Right cardiac atrium (tissue), 5 donors: ENCODE measurements at regions of chr2 and their contacts with region 1.

Region 1: GRCh38 chr2:178128836-178129630 is 16.8 kb downstream of the RBM45 start:
- DNase-seq: no peak
- ATAC-seq: no peak
- H3K4me3 ChIP-seq: no peak overlapping the region
- H3K27ac ChIP-seq: no peak overlapping the region
- H3K4me1 ChIP-seq: peaks cover 1% of the 10 kb centered on the region
- H3K27me3 ChIP-seq: no peaks in the 10 kb centered on the region

Region 2: DNA sequence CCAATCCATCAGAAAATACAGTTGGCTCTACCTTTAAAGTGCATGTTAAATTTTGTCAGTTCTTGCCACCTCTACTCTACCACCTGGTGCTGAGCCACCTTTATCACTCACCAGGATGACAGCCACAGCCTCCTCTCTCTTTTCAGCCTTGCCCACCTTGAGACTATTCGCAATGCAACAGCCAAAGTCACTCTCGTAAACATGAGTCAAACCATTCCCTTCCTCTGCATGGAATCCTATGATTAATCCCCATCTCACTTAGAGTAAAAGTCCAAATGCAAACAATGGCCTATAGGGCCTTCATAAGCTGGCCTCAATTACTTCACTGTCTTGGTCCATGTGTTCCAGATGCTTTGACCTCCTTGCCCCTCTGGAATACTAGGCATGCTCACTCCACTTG is 59.4 kb after region 1 on chr2:
- intact Hi-C with region 1: no loop called
- DNase-seq: no peak
- ATAC-seq: no peak
- H3K4me3 ChIP-seq: no peak overlapping the region
- H3K27ac ChIP-seq: no peak overlapping the region
- H3K4me1 ChIP-seq: no peaks in the 10 kb centered on the region
- H3K27me3 ChIP-seq: no peaks in the 10 kb centered on the region

Region 3: GRCh38 chr2:178397002-178397605 is 268.1 kb after region 1 on chr2:
- intact Hi-C with region 1: loop called in 1 of 4 experiments (anchors 10 kb)
- DNase-seq: no peak
- ATAC-seq: peak; percentile 64 to 71
- H3K4me3 ChIP-seq: no peak overlapping the region
- H3K27ac ChIP-seq: no peak overlapping the region
- H3K4me1 ChIP-seq: no peaks in the 10 kb centered on the region
- H3K27me3 ChIP-seq: no peaks in the 10 kb centered on the region